Natural killer cell (primary cell): ENCODE measurements at regions of chr19 and their contacts with region 1.

Region 1: DNA sequence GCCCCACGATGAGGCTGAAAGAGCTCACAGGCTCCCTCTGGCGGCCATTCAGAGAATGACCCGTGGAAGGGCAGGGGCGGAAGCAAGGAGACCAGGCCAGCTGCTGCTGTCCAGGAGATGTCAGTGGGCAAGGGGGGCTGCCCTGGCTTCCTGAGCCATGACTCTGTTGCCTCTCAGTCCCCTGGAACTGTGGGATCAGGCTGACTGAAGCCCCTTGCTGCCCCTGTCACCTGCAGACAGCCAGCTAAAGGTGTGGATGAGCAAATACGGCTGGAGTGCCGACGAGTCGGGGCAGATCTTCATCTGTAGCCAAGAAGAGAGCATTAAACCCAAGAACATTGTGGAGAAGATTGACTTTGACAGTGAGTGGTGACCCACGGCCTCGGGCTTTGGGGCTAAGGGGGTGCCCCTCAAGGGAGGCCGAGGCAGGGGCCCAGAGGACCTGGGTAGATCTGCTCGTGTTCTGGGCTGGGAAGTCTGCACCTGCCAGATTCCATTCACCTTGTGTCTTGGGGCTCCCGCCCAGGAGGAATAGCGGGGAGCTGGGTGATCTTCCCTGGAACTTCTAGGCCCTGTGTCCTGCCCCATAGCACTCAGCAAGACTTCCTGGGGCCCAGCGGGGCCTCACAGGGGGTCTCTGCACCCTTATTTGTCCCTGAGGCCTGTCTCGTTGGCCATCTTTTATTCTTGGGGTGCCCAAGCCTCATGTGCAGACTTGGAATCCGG is 12.5 kb upstream of the ACTN4 start:
- DNase-seq: peak; percentile 75 to 85
- ATAC-seq: peak; percentile 49 to 71 (median 53)
- H3K4me3 ChIP-seq: no peak overlapping the region
- H3K4me3 Mint-ChIP-seq: peak overlapping the region; percentile 73
- H3K27ac ChIP-seq: peak overlapping the region; percentile 24
- H3K27ac Mint-ChIP-seq: peak overlapping the region; percentile 93 to 97
- H3K4me1 ChIP-seq: peaks cover 31% of the 10 kb centered on the region
- H3K4me1 Mint-ChIP-seq: peaks cover 32 to 33% of the 10 kb centered on the region in 2 donors
- H3K27me3 ChIP-seq: no peaks in the 10 kb centered on the region
- H3K27me3 Mint-ChIP-seq: no peaks in the 10 kb centered on the region
- CTCF ChIP-seq: peak; percentile 97

Region 2: GRCh38 chr19:38402967-38403861 is 231.7 kb before region 1 on chr19 and contains the start of gene FAM98C:
- intact Hi-C with region 1: loop called (anchors 1 kb)
- DNase-seq: peak; percentile 99
- ATAC-seq: peak; percentile 95 to 99 (median 96)
- H3K4me3 ChIP-seq: peak within 1 kb of the TSS; percentile 93
- H3K4me3 Mint-ChIP-seq: peak within 1 kb of the TSS; percentile 97
- H3K27ac ChIP-seq: peak within 1 kb of the TSS; percentile 84
- H3K27ac Mint-ChIP-seq: peak within 1 kb of the TSS; percentile 86 to 95
- H3K4me1 ChIP-seq: peaks cover 16% of the 10 kb centered on the region
- H3K4me1 Mint-ChIP-seq: peaks cover 10 to 19% of the 10 kb centered on the region in 2 donors
- H3K27me3 ChIP-seq: peaks cover 3% of the 10 kb centered on the region
- H3K27me3 Mint-ChIP-seq: peaks cover 12 to 16% of the 10 kb centered on the region in 2 donors
- CTCF ChIP-seq: peak; percentile 100
- total RNA-seq, gene FAM98C: 36.9 to 42.1 (median 41.6) TPM

Region 3: DNA sequence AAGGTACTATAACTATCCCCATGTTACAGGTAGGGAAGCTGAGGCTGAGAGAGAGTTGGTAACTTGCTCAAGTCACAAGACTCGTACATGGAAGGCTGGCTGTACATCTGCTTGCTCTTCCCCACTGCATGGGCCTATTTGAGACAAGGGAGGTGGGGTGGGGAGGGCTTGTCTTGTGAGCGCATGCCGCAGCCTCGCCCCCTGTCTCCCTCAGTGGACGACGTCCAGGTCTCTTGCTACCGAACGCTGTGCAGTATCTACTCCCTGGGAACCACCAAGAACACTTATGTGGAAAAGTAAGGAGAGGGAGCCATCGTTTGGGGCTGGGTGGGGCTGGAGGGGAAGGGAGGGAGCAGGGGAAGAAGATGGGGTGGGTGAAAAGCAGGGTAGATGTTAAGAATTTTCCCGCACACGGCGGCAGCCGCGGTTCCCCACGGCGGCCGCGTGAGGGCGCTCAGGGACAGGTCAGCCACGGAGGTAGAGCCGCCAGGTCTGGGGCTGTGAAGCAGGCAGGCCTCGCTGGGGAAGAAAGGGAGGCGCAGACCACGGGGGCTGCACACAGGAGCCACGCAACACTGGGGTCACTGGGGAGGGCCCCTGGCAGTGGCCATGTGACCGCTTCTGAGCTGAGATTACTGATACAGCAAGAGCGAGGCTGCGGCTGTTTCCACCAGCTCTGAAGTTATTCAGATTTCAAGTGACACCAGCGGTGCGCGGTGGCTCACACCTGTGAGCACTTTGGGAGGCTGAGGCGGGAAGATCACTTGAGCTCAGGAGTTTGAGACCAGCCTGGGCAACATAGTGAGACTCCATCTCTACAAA is 119.9 kb before region 1 on chr19:
- intact Hi-C with region 1: loop called (anchors 1 kb)
- DNase-seq: peak; percentile 65 to 86
- ATAC-seq: peak; percentile 83 to 97 (median 95)
- H3K4me3 ChIP-seq: no peak overlapping the region
- H3K4me3 Mint-ChIP-seq: no peak overlapping the region
- H3K27ac ChIP-seq: no peak overlapping the region
- H3K27ac Mint-ChIP-seq: no peak overlapping the region
- H3K4me1 ChIP-seq: peaks cover 7% of the 10 kb centered on the region
- H3K4me1 Mint-ChIP-seq: peaks cover 5 to 6% of the 10 kb centered on the region in 2 donors
- H3K27me3 ChIP-seq: no peaks in the 10 kb centered on the region
- H3K27me3 Mint-ChIP-seq: peaks cover 0 to 7% of the 10 kb centered on the region in 2 donors
- CTCF ChIP-seq: peak; percentile 82

Region 4: GRCh38 chr19:38544034-38544958 is 90.6 kb before region 1 on chr19:
- intact Hi-C with region 1: loop called (anchors 1 kb)
- DNase-seq: peak in 1 of 2 donors; percentile 78
- ATAC-seq: peak; percentile 77 to 85 (median 84)
- H3K4me3 ChIP-seq: no peak overlapping the region
- H3K4me3 Mint-ChIP-seq: peak overlapping the region; percentile 43
- H3K27ac ChIP-seq: no peak overlapping the region
- H3K27ac Mint-ChIP-seq: peak overlapping the region in 1 of 2 donors; percentile 5
- H3K4me1 ChIP-seq: peaks cover 14% of the 10 kb centered on the region
- H3K4me1 Mint-ChIP-seq: peaks cover 7 to 11% of the 10 kb centered on the region in 2 donors
- H3K27me3 ChIP-seq: no peaks in the 10 kb centered on the region
- H3K27me3 Mint-ChIP-seq: peaks cover 0 to 3% of the 10 kb centered on the region in 2 donors
- CTCF ChIP-seq: peak; percentile 66